Endothelial cell of umbilical vein (primary cell): ENCODE measurements at regions of chr4 and their contacts with region 1.

Region 1: DNA sequence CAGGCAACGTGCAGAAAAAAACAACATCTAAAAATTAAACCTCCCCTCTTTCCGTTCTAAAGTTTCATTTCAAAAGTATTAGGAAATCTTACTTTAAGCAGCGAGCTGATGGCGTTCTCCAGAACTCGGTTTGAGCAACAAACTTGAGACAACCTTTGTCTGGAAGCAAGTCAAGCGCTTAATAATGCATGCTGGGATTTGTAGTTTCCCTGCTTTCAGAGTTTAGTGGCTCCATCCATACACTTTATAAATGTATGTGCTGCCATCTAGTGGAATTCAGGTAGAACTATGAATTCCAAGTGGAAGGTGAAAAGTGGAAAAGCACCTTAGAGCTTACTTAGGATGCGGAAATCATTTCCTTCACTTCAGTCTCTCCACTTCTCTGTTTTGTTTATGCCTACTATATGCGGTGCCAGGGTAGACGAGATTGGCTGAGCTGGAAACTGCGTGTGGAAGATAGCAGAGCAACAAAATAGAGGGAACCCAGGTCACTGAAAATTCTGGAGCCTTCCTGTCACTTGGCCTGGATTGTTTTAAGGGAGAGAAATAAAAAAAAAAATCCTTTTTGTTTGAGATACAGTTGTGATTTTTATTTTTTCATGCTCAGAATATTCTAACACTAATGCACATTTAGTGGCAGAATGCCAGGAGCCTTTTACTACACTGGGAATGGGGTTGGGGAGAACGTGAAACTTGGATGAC is at the start of gene BDH2:
- DNase-seq: peak; percentile 93
- H3K4me3 ChIP-seq: peak within 1 kb of the TSS; percentile 21 to 82 (median 48)
- H3K27ac ChIP-seq: peak within 1 kb of the TSS; percentile 49
- H3K4me1 ChIP-seq: peaks cover 8% of the 10 kb centered on the region
- H3K27me3 ChIP-seq: no peaks in the 10 kb centered on the region
- CTCF ChIP-seq: peak; percentile 53 to 59
- POLR2A ChIP-seq: no peak
- total RNA-seq, gene BDH2: 29.4 and 36.4 TPM in 2 replicates

Region 2: DNA sequence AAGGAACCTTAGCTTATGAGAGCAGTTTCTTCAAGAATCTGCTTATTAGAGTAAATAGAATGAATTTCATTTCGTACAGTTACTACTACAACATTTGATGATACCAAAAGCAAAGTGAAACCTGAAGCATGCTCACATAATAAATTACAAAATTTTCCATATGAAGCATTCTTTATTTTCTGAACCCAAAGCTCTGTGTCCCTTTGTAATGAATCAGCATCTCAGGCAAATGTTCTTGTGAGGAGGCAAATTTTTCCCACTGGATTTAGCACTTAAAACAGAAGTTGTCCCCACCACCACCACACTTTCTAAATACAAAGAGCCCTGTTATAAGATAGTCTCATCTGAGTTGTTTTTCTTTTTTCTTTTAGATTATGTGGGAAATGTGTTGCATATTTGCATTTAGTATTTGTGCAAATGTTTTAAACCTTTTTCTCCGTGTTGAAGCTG is 669.4 kb before region 1 on chr4:
- CTCF ChIA-PET with region 1: interaction called, 17 read pairs
- POLR2A ChIA-PET with region 1: no interaction called
- dilution Hi-C with region 1: no loop called
- intact Hi-C with region 1: loop called (anchors 1 kb)
- DNase-seq: peak; percentile 50
- H3K4me3 ChIP-seq: peak overlapping the region; percentile 49 to 97 (median 97)
- H3K27ac ChIP-seq: peak overlapping the region; percentile 84
- H3K4me1 ChIP-seq: peaks cover 4% of the 10 kb centered on the region
- H3K27me3 ChIP-seq: no peaks in the 10 kb centered on the region
- CTCF ChIP-seq: no peak
- POLR2A ChIP-seq: no peak

Region 3: DNA sequence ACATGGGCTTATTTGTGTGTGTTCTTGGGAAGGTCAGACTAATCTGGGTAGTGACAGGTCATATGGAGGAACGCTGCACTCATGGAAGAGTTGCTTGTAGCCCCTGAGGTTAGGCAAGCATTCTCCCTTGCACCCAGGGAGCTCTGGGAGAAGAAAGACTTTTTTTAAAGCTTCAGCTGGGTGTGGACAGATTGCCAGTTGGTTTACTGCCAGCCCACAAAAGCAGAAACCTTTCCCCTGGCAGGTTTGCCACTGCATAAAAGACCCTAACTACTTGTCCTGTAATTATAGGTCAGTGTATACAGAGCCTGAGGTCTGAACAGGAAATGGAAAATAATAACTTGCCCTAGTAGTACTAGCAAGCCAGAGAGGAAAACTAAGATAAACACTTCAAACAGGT is 606.0 kb before region 1 on chr4:
- CTCF ChIA-PET with region 1: no interaction called
- POLR2A ChIA-PET with region 1: no interaction called
- dilution Hi-C with region 1: no loop called
- intact Hi-C with region 1: no loop called
- DNase-seq: no peak
- H3K4me3 ChIP-seq: no peak overlapping the region
- H3K27ac ChIP-seq: no peak overlapping the region
- H3K4me1 ChIP-seq: no peaks in the 10 kb centered on the region
- H3K27me3 ChIP-seq: no peaks in the 10 kb centered on the region
- CTCF ChIP-seq: no peak
- POLR2A ChIP-seq: no peak

Region 4: DNA sequence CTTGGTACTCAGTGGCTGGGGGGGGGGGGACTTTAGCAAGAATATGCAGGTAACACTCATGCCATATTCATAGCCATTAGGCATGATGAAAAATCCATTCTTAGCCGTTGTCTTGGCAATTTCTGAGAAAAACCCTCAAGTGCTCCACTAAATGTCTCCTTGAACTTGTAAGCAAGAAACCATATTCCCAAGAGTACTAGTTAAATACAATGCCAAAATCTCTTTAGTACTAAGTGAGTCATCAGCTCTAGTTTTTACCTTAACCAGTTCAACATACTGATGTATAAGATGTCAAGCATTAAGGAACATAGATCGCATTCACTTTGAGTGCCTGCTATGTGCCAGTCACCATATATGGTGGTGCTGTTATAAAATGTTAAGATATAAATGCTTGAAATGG is 300.0 kb before region 1 on chr4:
- CTCF ChIA-PET with region 1: no interaction called
- POLR2A ChIA-PET with region 1: no interaction called
- dilution Hi-C with region 1: no loop called
- intact Hi-C with region 1: loop called (anchors 5 kb)
- DNase-seq: no peak
- H3K4me3 ChIP-seq: no peak overlapping the region
- H3K27ac ChIP-seq: no peak overlapping the region
- H3K4me1 ChIP-seq: no peaks in the 10 kb centered on the region
- H3K27me3 ChIP-seq: no peaks in the 10 kb centered on the region
- CTCF ChIP-seq: no peak
- POLR2A ChIP-seq: no peak

Region 5: DNA sequence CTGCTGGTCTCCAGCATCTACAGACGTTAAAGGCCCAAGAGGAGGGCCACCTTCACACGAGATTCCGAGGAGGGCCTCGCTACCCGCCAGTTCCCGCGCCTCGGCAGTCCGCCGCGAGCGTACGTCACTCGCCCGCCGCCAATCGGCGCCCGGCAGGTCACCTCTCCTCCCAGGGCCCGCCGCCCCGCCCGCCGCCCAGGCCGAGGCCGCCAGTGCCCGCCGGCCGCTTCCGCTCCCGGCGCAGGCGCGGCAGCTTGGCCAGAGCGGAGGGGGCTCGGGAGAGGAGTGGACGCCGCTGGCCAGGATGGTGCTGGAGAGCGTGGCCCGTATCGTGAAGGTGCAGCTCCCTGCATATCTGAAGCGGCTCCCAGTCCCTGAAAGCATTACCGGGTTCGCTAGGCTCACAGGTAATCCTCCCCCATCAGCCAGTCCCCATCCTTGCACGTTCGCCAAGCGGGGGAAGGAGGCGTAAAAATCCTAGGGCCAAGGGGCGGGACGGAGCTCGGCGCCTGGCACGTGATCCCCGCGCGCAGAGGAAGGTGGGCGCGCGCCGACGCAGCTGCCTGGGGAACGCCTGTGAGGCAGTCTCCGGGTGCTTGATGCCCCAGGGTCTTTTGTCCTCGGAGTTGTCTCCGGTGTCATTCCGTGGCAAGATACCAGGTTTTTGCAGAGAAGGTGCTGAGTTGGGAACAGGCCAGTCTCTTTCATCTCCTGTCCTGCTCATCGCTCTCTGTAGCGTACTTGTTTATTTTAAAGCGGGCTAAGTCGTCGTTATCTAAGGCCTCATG is 230.9 kb before region 1 on chr4 and contains the start of gene CISD2:
- CTCF ChIA-PET with region 1: no interaction called
- POLR2A ChIA-PET with region 1: no interaction called
- dilution Hi-C with region 1: no loop called
- intact Hi-C with region 1: loop called (anchors 2 kb)
- DNase-seq: peak; percentile 94
- H3K4me3 ChIP-seq: peak within 1 kb of the TSS; percentile 43 to 88 (median 78)
- H3K27ac ChIP-seq: peak within 1 kb of the TSS; percentile 76
- H3K4me1 ChIP-seq: peaks cover 25% of the 10 kb centered on the region
- H3K27me3 ChIP-seq: no peaks in the 10 kb centered on the region
- CTCF ChIP-seq: no peak
- POLR2A ChIP-seq: peak; percentile 91
- total RNA-seq, gene CISD2: 26.5 and 28.4 TPM in 2 replicates

Region 6: DNA sequence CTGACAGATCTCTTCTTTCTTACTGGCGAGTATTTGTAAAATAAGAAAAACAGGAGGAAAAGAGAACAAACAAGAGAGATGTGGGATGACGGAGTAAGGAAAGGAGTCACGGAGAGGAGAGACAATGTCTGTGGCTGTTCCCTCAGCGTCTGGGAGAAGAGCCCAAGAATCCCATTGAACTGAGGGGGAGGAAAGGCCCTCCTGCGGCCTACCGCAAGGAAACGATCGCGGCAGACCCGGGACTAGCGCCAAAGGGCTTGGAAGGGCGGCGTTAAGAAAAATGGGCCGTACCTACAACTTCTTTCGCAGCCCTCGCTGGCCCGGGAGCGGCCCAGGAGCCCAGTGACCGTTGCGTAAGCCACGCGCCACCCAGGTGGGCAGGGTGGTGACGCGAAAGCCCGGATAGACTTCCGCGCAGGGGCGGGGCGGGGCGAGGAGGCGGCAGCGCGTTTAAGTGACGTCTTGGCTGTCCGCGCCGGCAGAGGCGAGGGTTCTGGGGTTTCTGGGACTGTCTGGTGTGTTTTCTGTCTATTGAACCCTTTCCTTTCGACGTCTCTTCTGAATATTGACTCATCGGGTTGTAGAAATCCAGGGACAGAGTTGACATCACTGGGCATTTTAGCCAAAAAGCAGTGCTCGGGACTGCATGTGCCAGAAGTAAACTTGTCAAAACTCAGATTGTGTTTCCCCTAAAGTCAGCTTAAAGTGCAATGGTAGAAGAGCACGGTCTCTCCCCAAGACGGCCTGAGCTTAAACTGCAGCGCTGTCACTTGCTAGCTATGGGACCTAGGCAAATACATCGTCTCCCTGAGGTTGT is 80.3 kb before region 1 on chr4 and contains the start of gene SLC9B1:
- CTCF ChIA-PET with region 1: no interaction called
- POLR2A ChIA-PET with region 1: no interaction called
- dilution Hi-C with region 1: no loop called
- intact Hi-C with region 1: loop called (anchors 2 kb)
- DNase-seq: peak; percentile 96
- H3K4me3 ChIP-seq: peak within 1 kb of the TSS; percentile 28 to 62 (median 48)
- H3K27ac ChIP-seq: peak within 1 kb of the TSS; percentile 68
- H3K4me1 ChIP-seq: peaks cover 8% of the 10 kb centered on the region
- H3K27me3 ChIP-seq: no peaks in the 10 kb centered on the region
- CTCF ChIP-seq: no peak
- POLR2A ChIP-seq: peak; percentile 79
- total RNA-seq, gene SLC9B1: 0.49 TPM in 1 of 2 replicates, not detected in the other

Region 7: GRCh38 chr4:103786014-103786413 is 686.2 kb after region 1 on chr4:
- CTCF ChIA-PET with region 1: interaction called, 4 read pairs
- POLR2A ChIA-PET with region 1: no interaction called
- dilution Hi-C with region 1: no loop called
- intact Hi-C with region 1: loop called (anchors 2 kb)
- DNase-seq: peak; percentile 40
- H3K4me3 ChIP-seq: no peak overlapping the region
- H3K27ac ChIP-seq: no peak overlapping the region
- H3K4me1 ChIP-seq: no peaks in the 10 kb centered on the region
- H3K27me3 ChIP-seq: no peaks in the 10 kb centered on the region
- CTCF ChIP-seq: peak; percentile 44 to 68
- POLR2A ChIP-seq: no peak

Region 8: GRCh38 chr4:103934178-103934789 is 834.4 kb after region 1 on chr4:
- CTCF ChIA-PET with region 1: interaction called, 5 read pairs
- POLR2A ChIA-PET with region 1: no interaction called
- dilution Hi-C with region 1: no loop called
- intact Hi-C with region 1: loop called (anchors 10 kb)
- DNase-seq: peak; percentile 43
- H3K4me3 ChIP-seq: no peak overlapping the region
- H3K27ac ChIP-seq: no peak overlapping the region
- H3K4me1 ChIP-seq: no peaks in the 10 kb centered on the region
- H3K27me3 ChIP-seq: no peaks in the 10 kb centered on the region
- CTCF ChIP-seq: peak; percentile 37 to 42
- POLR2A ChIP-seq: no peak